ENCODE measurements at regions of chr10 and their contacts with region 1.

Region 1: DNA sequence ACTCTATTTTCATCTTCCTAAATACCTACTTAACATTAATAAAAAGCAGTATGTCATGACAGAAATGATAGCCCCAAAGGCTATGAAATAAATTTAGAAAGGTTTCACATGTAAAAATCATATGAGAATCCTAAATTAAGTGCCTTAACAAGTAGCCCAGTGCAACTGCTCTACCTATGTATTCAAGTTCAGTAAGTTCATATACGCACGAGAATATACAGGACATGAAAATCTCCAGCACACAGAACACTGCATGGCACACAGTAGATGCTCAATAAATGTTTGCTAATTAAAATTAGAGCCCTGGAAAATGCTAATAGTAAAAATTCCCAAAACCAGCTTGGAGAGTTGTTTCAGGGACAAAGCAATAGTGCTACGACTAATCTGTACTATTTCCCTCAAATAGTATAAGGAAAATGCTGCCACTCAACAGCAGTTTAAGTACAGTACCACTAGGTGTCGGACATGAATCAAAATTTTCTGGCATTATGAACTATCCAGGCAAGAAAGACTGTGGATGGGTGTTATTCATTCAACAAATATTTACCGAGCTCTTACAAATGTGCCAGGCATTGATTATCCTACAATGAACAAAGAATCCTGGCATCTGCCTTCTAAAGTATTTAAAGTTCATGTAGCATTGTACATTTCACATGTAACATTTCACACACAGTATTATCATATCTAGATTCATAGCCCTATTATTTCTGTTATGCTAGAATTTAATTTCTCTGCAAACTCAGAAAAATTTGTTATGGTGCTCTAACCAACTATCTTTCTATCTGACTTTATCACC is 80.9 kb downstream of the ARHGAP21 start:
- DNase-seq: peak; percentile 40
- ATAC-seq: peak; percentile 86
- H3K4me3 ChIP-seq: no peak overlapping the region
- H3K27ac ChIP-seq: no peak overlapping the region
- H3K4me1 ChIP-seq: peaks cover 14% of the 10 kb centered on the region
- H3K27me3 ChIP-seq: no peaks in the 10 kb centered on the region
- CTCF ChIP-seq: peak; percentile 74 to 85 (median 83)
- EP300 ChIP-seq: no peak
- POLR2A ChIP-seq: no peak
- RAD21 ChIP-seq: peak; percentile 96

Region 2: DNA sequence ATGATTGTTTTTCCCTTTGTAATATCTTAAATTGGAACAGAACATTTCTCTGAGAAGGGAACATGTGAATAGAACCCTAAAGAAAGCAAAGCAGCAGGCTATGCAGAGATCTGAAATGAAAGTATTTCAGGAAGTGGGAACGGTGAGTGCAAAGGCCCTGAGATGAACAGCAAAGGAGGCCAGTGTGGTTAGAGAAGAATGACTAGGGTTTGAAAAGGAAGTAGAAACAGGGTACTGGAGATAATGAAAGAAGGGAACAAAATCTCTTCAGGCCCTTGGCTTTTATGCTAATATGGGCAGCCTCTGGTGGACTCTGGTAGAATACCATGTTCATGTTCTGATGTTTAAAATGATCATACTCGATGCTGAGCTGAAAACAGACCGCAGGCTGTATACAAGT is 58.6 kb after region 1 on chr10:
- CTCF ChIA-PET with region 1: interaction called, 4 read pairs
- POLR2A ChIA-PET with region 1: interaction called, 6 read pairs
- RAD21 ChIA-PET with region 1: interaction called, 7 read pairs
- SMC1A ChIA-PET with region 1: interaction called, 14 read pairs
- in situ Hi-C with region 1: no loop called
- intact Hi-C with region 1: no loop called
- DNase-seq: peak; percentile 55
- ATAC-seq: peak; percentile 90
- H3K4me3 ChIP-seq: 0 out of 2 replicates have a peak overlapping the region, but pooled peaks have one; percentile 0
- H3K27ac ChIP-seq: no peak overlapping the region; the same call in 1 of the 2 replicates
- H3K4me1 ChIP-seq: peaks cover 6% of the 10 kb centered on the region
- H3K27me3 ChIP-seq: no peaks in the 10 kb centered on the region
- CTCF ChIP-seq: 0 out of 6 replicates have a peak, but pooled peaks of 2 of the 3 experiments have one; percentile 8 to 10
- EP300 ChIP-seq: no peak
- POLR2A ChIP-seq: no peak
- RAD21 ChIP-seq: no peak

Region 3: DNA sequence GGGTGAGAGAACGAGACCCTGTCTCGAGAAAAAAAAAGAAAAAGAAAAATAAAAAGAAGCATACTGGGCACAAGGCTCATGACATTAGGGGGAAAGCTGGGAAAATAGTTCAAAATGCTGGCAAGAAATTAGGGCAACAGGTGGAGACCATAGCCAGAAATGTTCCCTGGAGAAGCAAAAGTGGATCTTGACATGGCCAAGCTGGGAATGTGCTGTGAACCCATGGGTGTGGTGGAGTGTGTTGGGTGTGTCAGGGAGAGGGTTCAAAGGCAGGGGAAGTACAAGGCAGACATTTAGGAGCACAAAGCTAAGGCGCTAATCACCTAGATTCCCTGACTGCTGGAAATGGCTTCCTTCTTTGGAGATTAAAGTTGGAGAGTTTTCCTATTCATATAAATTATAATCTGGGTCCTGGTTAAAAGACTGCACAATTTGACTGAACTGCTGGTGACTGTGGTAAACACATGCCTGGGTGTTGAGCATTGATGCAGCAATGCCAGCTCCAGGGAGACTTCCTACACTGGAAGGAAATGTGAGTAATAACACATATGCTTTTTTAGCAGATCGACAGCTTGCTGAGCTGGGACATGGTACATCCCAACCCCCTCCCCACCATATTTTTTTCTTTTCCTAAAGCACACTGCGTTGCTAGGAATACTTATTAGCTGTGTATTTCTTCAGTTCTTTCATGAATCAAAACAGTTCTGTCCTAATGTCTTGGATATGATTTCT is 151.0 kb after region 1 on chr10:
- CTCF ChIA-PET with region 1: no interaction called
- POLR2A ChIA-PET with region 1: no interaction called
- RAD21 ChIA-PET with region 1: no interaction called
- SMC1A ChIA-PET with region 1: no interaction called
- in situ Hi-C with region 1: no loop called
- intact Hi-C with region 1: no loop called
- DNase-seq: no peak
- ATAC-seq: no peak
- H3K4me3 ChIP-seq: no peak overlapping the region
- H3K27ac ChIP-seq: no peak overlapping the region
- H3K4me1 ChIP-seq: no peaks in the 10 kb centered on the region
- H3K27me3 ChIP-seq: no peaks in the 10 kb centered on the region
- CTCF ChIP-seq: no peak
- EP300 ChIP-seq: no peak
- POLR2A ChIP-seq: no peak
- RAD21 ChIP-seq: no peak

Region 4: GRCh38 chr10:24814568-24815313 is 171.9 kb after region 1 on chr10:
- CTCF ChIA-PET with region 1: no interaction called
- POLR2A ChIA-PET with region 1: no interaction called
- RAD21 ChIA-PET with region 1: no interaction called
- SMC1A ChIA-PET with region 1: no interaction called
- in situ Hi-C with region 1: no loop called
- intact Hi-C with region 1: loop called (anchors 5 kb)
- DNase-seq: no peak
- ATAC-seq: no peak
- H3K4me3 ChIP-seq: no peak overlapping the region
- H3K27ac ChIP-seq: no peak overlapping the region
- H3K4me1 ChIP-seq: no peaks in the 10 kb centered on the region
- H3K27me3 ChIP-seq: no peaks in the 10 kb centered on the region
- CTCF ChIP-seq: no peak
- EP300 ChIP-seq: no peak
- POLR2A ChIP-seq: no peak
- RAD21 ChIP-seq: no peak

Region 5: DNA sequence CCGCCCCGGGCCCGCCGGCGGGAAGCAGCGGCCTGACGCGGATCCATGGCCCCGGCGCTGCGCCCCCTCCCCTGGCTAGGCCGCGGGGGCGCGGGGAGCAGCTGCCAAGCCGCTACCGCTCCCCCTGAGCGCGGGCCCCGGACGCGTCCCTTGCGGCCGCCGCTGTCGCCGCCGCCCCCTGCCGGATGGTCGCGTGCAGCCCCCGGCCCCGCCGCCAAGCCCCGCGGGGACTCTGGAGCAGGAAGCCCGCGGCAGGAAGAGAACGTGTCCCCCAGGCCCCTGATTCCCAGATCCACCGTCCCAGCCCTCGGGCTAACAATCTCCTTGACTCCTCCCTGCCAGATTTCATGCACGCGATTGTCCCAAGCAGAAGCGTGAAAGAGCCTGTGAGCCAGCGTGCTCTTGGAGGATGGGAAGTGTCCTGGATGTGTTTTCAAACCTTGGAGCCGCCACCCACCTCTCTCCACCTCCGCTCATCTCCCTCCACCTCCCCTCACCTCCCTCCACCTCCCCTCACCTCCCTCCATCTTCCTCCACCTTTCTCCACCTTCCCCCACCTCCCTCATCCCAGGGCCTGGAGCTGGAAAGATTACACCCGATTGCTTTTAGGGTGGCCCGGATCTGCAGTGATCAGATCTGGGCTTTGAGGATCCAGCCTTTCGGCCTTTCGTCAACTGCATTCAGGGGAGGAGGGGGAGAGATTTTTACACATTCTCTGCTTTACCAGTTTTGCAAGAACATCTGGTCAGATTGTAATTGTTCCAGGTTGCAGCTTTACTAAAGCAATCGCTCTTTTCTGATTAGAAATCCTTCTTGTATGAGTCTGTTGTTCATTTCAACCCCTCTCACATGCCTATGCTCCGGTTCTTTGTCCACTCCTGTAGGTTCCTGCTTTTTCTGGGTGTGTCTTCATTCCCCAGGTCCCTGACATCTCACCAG is 310.2 kb after region 1 on chr10:
- CTCF ChIA-PET with region 1: interaction called, 7 read pairs
- POLR2A ChIA-PET with region 1: no interaction called
- RAD21 ChIA-PET with region 1: interaction called, 22 read pairs
- SMC1A ChIA-PET with region 1: interaction called, 10 read pairs
- in situ Hi-C with region 1: no loop called
- intact Hi-C with region 1: no loop called
- DNase-seq: no peak
- ATAC-seq: peak; percentile 72
- H3K4me3 ChIP-seq: peak overlapping the region; percentile 66; the same call in 1 of the 2 replicates
- H3K27ac ChIP-seq: no peak overlapping the region
- H3K4me1 ChIP-seq: peaks cover under 1% of the 10 kb centered on the region; the same call in 1 of the 2 replicates
- H3K27me3 ChIP-seq: no peaks in the 10 kb centered on the region
- CTCF ChIP-seq: peak; percentile 20 to 53 (median 24); a peak in 4 of 6 replicates
- EP300 ChIP-seq: no peak
- POLR2A ChIP-seq: peak; percentile 51
- RAD21 ChIP-seq: peak; percentile 49

Region 6: GRCh38 chr10:25068152-25069058 is 425.6 kb after region 1 on chr10:
- CTCF ChIA-PET with region 1: no interaction called
- POLR2A ChIA-PET with region 1: no interaction called
- RAD21 ChIA-PET with region 1: no interaction called
- SMC1A ChIA-PET with region 1: no interaction called
- in situ Hi-C with region 1: loop called (anchors 5 kb)
- intact Hi-C with region 1: no loop called
- DNase-seq: no peak
- ATAC-seq: peak; percentile 72
- H3K4me3 ChIP-seq: no peak overlapping the region
- H3K27ac ChIP-seq: no peak overlapping the region
- H3K4me1 ChIP-seq: no peaks in the 10 kb centered on the region
- H3K27me3 ChIP-seq: no peaks in the 10 kb centered on the region
- CTCF ChIP-seq: no peak
- EP300 ChIP-seq: no peak
- POLR2A ChIP-seq: no peak
- RAD21 ChIP-seq: no peak

Region 7: DNA sequence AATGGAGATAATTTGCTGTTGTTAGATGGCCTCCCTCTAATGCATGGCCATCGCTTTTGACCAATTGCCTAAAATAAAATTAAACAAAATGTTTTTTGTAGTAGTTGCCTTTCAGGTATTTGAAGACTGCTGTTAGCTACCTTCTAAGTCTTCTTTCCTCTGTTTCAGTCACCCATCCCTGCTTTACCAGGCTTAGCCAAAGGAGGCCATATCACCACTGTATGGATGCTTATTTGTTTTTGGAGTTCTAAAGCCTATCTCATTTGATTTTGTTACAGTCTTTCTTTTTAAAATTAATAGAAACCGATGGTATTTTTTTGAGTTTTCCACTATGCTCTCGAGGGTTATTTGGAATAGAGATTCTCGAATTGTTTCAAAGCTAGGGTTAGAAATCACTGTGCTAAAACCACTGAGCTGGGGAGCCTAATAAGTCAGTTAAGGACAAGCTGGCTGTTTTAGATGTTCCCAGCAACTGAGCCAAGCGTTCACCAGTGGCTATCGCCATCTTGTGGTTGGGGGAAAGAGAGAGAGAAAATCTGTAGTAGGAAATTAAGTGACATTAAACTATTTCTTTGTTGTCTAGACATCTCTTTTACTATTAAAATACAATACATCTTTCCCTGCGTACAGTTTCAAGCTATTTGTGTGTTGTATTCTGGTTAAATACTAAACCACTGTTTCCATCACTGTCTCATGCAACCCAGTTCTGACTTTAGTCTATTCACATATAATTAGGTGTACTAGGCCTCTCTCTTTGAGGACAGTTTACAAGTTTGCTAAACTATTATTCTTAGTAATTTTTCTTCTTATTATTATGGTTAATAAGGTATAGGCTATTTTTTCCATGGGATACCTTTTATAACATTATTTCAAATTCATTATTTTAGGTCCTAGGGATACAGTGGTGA is 584.2 kb after region 1 on chr10:
- CTCF ChIA-PET with region 1: no interaction called
- POLR2A ChIA-PET with region 1: no interaction called
- RAD21 ChIA-PET with region 1: no interaction called
- SMC1A ChIA-PET with region 1: interaction called, 3 read pairs
- in situ Hi-C with region 1: no loop called
- intact Hi-C with region 1: loop called (anchors 10 kb)
- DNase-seq: peak; percentile 4
- ATAC-seq: peak; percentile 80
- H3K4me3 ChIP-seq: no peak overlapping the region
- H3K27ac ChIP-seq: no peak overlapping the region
- H3K4me1 ChIP-seq: no peaks in the 10 kb centered on the region
- H3K27me3 ChIP-seq: no peaks in the 10 kb centered on the region
- CTCF ChIP-seq: peak; percentile 50 to 74 (median 59)
- EP300 ChIP-seq: no peak
- POLR2A ChIP-seq: no peak
- RAD21 ChIP-seq: peak; percentile 62